Panc1 (cell line): ENCODE measurements at regions of chr3 and their contacts with region 1.

Region 1: DNA sequence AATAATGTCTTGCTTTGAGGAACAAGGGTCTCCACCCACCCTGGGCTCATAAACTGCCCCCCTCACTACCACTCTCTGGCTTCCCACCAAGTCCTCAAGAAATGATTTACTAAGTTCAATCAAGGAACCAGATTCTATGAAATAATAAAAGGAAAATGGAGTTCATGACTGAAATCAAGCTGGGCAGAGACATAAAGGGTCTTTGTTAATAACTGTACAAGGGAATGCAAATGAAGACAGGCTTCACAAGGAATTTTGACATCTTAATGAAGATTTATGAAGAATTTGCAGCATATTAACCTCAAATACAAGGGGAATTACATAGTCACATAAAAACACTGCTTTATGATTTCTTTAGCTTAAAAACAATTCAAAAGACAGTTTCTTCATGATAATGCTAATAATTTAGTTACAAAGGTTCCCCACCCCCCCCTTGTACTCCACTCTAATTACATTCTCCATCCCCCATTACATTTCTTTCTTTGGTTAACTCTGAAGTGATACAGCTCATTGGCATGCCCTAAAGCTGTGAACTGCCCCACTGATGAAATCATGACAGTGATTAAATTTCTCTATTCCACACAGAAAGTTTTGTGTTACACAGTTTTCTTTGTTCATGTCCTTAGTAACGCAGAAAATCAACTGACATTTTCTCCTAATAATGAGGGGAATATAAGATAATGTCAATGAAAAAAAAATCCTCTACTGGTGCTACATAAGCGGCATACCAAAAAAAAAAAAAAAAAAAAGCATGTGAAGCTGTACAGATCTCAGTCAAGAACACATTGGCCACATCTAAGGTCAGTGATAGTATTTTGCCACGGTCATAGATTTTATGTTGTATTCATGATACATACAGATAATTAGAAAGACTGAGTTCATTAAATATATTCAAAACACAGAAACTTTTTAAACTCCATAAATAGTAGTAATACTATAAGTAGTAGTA is 54.4 kb downstream of the WWTR1 start:
- DNase-seq: no peak
- ATAC-seq: no peak
- H3K4me3 ChIP-seq: no peak overlapping the region
- H3K27ac ChIP-seq: peak overlapping the region; percentile 100
- H3K4me1 ChIP-seq: peaks cover 98% of the 10 kb centered on the region
- H3K27me3 ChIP-seq: no peaks in the 10 kb centered on the region
- CTCF ChIP-seq: no peak

Region 2: DNA sequence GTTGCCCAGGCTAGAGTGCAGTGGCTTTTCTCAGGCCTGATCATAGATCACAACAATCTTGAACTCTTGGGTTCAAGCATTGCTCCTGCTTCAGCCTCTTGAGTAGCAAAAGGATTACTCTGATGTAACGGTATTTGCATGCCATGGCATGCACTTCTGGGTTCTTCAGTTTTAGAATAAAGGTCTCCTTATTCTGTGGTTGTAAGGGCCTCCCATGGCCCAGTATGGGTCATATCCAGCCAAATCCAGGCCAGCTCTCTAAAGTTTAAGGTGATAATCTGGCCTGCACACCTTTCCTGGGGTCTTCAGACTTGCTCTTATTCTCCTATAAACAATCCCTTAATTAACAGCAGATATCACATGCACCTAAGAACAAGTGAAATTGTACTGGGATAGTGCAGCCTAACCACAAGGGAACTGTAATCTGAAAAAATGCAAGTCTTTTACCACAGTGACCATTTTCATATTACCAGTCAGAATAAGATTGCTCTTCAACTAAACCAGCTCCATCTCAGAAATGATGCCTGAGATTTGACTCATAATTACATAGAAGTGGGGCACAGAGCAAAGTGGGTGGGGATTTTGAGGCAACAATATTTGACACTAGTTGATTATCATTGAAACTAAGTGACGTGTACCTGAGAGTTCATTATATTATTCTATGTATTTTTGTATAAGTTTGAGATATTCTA is 123.5 kb after region 1 on chr3:
- CTCF ChIA-PET with region 1: no interaction called
- POLR2A ChIA-PET with region 1: interaction called, 13 read pairs
- in situ Hi-C with region 1: no loop called
- intact Hi-C with region 1: no loop called
- DNase-seq: no peak
- ATAC-seq: no peak
- H3K4me3 ChIP-seq: no peak overlapping the region
- H3K27ac ChIP-seq: no peak overlapping the region
- H3K4me1 ChIP-seq: no peaks in the 10 kb centered on the region
- H3K27me3 ChIP-seq: no peaks in the 10 kb centered on the region
- CTCF ChIP-seq: no peak